ENCODE measurements at regions of chr6 and their contacts with region 1.

Region 1: DNA sequence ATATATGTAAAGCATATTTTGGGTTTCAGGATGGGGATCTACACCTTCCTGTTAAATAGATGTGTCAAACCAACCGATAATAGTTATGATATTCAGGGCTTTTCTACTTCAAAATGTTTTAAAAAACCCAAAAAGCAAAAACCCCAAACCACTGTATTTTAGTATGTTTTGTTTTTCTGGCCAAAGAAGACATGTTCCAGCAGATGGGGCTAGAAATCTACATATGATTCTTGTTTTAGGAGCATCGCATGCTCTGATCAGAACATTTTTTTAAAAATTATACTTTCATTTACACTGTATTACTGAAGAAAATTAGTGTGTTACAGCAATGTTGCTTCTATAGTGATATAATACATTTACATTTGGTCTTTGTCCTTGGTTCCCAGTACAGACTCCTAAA is 11.0 kb downstream of the RMND1 start:
- DNase-seq: no peak
- H3K4me3 ChIP-seq: no peak overlapping the region
- H3K27ac ChIP-seq: peak overlapping the region in 2 of 4 donors; percentile 0 to 15
- H3K4me1 ChIP-seq: peaks cover 29 to 53% (median 43%) of the 10 kb centered on the region in 4 donors
- H3K27me3 ChIP-seq: no peaks in the 10 kb centered on the region
- CTCF ChIP-seq: peak; percentile 32 to 51 (median 34)
- EP300 ChIP-seq: no peak
- POLR2A ChIP-seq: no peak

Region 2: GRCh38 chr6:151475653-151476523 is 35.0 kb after region 1 on chr6:
- intact Hi-C with region 1: loop called (anchors 1 kb)
- DNase-seq: no peak
- H3K4me3 ChIP-seq: peak overlapping the region in 2 of 4 donors; percentile 13 to 37
- H3K27ac ChIP-seq: no peak overlapping the region
- H3K4me1 ChIP-seq: peaks cover 0 to 9% (median 7%) of the 10 kb centered on the region in 4 donors
- H3K27me3 ChIP-seq: no peaks in the 10 kb centered on the region
- CTCF ChIP-seq: peak; percentile 59 to 75 (median 69)
- EP300 ChIP-seq: no peak
- POLR2A ChIP-seq: no peak

Region 3: DNA sequence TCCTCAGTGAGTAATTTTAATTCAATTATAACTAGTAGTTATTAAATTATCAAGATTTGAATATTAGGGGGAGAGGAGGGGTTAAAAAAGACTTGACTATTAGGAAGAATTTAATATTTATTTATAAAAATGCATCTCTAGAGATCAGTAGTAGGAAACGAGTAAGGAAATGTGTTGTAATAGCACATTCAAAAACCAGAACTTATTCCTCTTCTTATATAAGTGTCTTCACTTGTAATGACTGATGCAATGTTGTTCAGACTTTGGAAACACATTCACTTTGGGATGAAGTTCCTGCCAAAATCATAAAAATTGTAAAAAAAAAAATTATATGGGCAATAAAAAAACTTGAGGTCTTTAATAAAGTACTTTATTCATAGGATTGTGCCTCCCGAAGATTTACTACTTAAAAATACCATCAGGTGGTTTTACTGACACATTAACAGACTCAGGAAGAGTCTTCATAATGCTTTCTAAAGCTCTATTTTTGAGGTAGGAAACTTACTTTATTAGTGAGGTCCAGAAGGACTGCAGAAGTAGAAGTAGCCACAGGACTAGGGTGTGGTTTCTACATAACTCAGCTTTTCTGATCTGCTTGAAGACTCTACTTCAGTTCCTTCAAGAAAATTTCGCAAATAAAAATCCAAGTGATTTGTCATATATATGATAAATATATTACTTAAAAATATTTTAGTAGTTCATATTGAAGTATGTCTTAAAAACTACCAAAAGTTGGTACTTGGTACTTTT is 112.7 kb after region 1 on chr6:
- intact Hi-C with region 1: no loop called
- DNase-seq: no peak
- H3K4me3 ChIP-seq: no peak overlapping the region
- H3K27ac ChIP-seq: no peak overlapping the region
- H3K4me1 ChIP-seq: no peaks in the 10 kb centered on the region
- H3K27me3 ChIP-seq: no peaks in the 10 kb centered on the region
- CTCF ChIP-seq: no peak
- EP300 ChIP-seq: no peak
- POLR2A ChIP-seq: no peak

Measured in esophagus muscularis mucosa (tissue), 4 donors.